Transverse colon (tissue), 4 donors: ENCODE measurements at regions of chr20 and their contacts with region 1.

Region 1: DNA sequence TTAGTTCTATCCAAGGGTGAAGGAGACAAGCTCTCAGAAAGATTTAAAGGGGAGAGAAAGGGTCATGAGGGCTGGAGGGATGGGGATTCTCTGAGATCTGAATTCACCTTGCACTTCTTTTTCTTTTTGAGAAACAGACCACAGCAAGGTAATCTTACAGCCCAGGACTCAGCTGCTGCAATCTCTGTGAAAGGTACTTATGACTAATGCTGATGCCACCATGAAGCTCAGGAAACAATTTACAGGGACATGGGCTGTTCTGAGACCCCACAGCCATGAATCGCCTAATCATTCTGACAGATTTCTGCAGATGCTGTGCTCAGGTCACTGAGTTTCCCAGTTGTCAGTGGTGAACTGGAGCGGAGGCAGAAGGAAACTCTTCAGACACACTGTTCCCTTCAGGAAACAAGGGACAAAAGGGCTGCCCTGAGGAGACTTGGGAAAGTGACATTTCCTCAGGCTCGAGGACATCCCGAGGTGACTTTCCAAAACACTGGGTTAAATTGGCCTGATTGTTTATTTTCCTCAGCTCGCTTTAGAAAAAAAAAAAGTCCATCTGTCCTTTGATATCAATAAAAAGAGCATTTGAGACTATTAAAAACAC is 103.8 kb upstream of the PLCB4 start:
- DNase-seq: no peak
- H3K4me3 ChIP-seq: no peak overlapping the region
- H3K27ac ChIP-seq: no peak overlapping the region
- H3K4me1 ChIP-seq: peaks cover 3 to 9% (median 5%) of the 10 kb centered on the region in 4 donors
- H3K27me3 ChIP-seq: no peaks in the 10 kb centered on the region
- CTCF ChIP-seq: no peak
- EP300 ChIP-seq: no peak
- POLR2A ChIP-seq: no peak

Region 2: DNA sequence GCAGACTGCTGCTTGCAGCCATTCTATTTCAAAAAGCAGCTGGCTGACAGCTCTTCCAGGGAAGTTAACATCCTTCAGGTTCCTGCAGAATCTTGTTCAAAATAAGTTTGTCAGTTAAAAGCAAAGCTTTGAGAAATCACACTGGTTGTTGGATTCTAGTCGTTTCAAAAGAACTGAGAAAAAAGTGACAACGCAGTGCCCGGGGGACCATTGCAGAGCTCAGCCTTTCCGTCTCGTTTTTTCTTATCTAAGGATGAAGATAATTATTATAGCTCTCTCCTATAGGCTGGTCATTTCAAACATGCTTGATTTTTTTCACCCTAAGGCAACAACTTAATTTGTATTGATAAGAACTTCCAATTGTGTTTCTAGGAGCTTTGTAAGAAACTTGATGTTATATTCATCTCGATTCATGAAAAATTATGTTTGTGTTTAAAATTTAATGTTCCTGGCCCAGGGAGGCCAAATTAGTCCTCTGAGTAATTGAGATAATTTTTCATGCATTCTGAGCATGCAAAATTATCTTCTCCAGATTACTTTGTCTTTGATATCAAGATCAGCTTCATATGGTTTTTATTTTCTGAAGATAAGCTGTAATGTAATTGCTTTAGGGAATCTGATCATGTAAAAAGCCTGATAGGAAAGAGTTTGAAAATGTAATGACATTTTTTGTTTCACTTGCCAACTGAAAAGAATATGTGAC is 1312.0 kb after region 1 on chr20:
- in situ Hi-C with region 1: no loop called
- intact Hi-C with region 1: loop called (anchors 5 kb)
- DNase-seq: no peak
- H3K4me3 ChIP-seq: no peak overlapping the region
- H3K27ac ChIP-seq: no peak overlapping the region
- H3K4me1 ChIP-seq: no peaks in the 10 kb centered on the region
- H3K27me3 ChIP-seq: peaks cover 5% of the 10 kb centered on the region
- CTCF ChIP-seq: no peak
- EP300 ChIP-seq: no peak
- POLR2A ChIP-seq: no peak